IMR-90 (cell line): ENCODE measurements at regions of chr15 and their contacts with region 1.

Region 1: DNA sequence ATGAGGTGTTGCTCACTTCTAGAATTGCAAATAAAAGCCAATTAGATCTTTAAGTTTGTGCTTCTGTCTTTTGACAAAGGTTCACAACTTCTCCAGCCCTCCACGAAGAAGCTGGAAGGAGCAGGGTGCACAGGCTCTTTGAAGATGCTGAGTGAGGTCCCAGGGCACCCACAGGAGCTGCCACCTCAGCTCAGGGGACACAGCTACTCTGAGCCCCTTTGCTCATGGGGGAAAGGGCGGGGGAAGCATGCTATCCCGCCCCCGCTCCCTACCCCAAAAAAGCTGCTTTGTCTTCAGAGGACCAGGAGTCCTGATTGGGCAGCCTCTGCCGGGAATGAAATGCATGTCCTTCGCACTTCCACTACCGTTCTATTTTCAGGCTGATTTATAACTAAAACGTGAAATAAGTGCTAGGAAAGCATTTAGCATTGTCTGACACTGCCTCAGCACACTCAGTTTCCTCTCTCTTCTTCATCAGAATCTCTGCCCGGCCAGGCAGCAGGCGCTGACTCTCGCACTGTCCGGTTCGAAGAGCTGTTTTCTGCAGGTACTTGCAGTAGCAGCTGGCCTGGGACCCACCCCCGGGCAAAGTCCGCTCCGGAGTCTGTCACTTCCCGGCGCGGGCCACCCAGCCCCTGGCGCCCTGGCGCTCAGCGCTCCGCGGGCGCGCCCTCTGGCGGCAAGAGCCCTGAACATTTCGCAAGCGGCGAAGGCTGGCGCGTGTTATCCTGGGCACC is 45.5 kb upstream of the KLHL25 start:
- DNase-seq: peak; percentile 41
- ATAC-seq: peak; percentile 98
- H3K4me3 ChIP-seq: peak overlapping the region; percentile 45
- H3K27ac ChIP-seq: no peak overlapping the region
- H3K4me1 ChIP-seq: no peaks in the 10 kb centered on the region
- H3K27me3 ChIP-seq: peaks cover 9% of the 10 kb centered on the region
- CTCF ChIP-seq: peak; percentile 83
- POLR2A ChIP-seq: no peak
- RAD21 ChIP-seq: peak; percentile 69

Region 2: GRCh38 chr15:85730001-85730820 is 110.0 kb before region 1 on chr15:
- CTCF ChIA-PET with region 1: interaction called, 6 read pairs
- POLR2A ChIA-PET with region 1: no interaction called
- dilution Hi-C with region 1: no loop called
- in situ Hi-C with region 1: no loop called
- intact Hi-C with region 1: loop called (anchors 1 kb)
- DNase-seq: peak; percentile 71
- ATAC-seq: peak; percentile 73
- H3K4me3 ChIP-seq: no peak overlapping the region
- H3K27ac ChIP-seq: no peak overlapping the region
- H3K4me1 ChIP-seq: peaks cover 4% of the 10 kb centered on the region
- H3K27me3 ChIP-seq: no peaks in the 10 kb centered on the region
- CTCF ChIP-seq: peak; percentile 80
- POLR2A ChIP-seq: no peak
- RAD21 ChIP-seq: peak; percentile 80

Region 3: DNA sequence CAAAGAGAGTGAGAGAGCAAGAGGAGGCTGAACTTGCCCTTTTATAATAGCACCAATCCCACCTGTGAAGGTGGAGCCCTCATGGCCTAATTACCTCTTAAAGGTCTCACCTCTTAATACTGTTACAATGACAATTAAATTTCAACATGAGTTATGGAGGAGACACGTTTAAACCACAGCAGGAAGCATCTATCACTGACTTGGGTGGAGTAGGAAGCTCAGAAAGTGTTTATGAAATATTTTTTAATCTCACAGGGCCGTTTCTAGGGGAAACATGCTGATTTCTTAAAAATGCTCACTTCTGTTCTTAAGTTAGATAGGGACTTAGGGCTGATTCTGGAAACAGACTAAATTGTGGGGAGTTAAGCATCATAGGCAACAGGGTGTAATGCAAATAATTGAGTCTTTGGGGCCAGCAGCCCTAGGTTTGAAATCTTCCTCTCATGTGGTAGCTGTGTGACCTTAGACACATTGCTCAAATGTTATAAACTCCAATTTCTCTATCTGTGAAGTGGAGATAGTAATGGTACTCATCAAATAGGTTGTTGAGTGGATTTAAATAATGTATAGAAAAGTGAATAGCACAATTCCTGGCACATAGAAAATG is 87.8 kb after region 1 on chr15:
- CTCF ChIA-PET with region 1: no interaction called
- POLR2A ChIA-PET with region 1: no interaction called
- dilution Hi-C with region 1: no loop called
- in situ Hi-C with region 1: no loop called
- intact Hi-C with region 1: no loop called
- DNase-seq: no peak
- ATAC-seq: no peak
- H3K4me3 ChIP-seq: no peak overlapping the region
- H3K27ac ChIP-seq: no peak overlapping the region
- H3K4me1 ChIP-seq: no peaks in the 10 kb centered on the region
- H3K27me3 ChIP-seq: no peaks in the 10 kb centered on the region
- CTCF ChIP-seq: no peak
- POLR2A ChIP-seq: no peak
- RAD21 ChIP-seq: no peak